Calu3 (cell line): ENCODE measurements at regions of chr1 and their contacts with region 1.

Region 1: DNA sequence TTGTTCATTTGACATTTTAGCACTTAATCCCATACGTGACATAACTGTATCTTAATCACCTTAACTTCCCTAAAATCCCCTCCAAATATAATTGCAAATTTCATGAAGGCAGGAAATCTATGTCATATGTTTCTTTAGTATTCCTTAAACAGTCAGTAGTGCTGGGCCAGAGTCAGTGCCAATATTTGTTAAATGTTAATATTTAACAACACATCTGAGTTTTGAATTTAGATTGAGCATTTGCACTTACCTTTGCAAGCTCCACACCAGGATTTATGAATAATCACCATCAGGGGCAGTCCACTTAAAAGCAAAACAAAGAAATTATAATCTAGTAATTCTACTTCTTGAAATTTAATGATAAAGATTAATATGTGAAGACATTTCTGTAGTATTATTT is 5.3 kb downstream of the KTI12 start:
- DNase-seq: no peak
- H3K4me3 Mint-ChIP-seq: no peak overlapping the region
- H3K27ac Mint-ChIP-seq: no peak overlapping the region
- H3K4me1 Mint-ChIP-seq: peaks cover 30% of the 10 kb centered on the region
- H3K27me3 Mint-ChIP-seq: no peaks in the 10 kb centered on the region
- CTCF ChIP-seq: no peak

Region 2: GRCh38 chr1:51453010-51453409 is 575.3 kb before region 1 on chr1:
- CTCF ChIA-PET with region 1: no interaction called
- intact Hi-C with region 1: loop called (anchors 5 kb)
- DNase-seq: no peak
- H3K4me3 Mint-ChIP-seq: no peak overlapping the region
- H3K27ac Mint-ChIP-seq: no peak overlapping the region
- H3K4me1 Mint-ChIP-seq: no peaks in the 10 kb centered on the region
- H3K27me3 Mint-ChIP-seq: no peaks in the 10 kb centered on the region
- CTCF ChIP-seq: no peak

Region 3: DNA sequence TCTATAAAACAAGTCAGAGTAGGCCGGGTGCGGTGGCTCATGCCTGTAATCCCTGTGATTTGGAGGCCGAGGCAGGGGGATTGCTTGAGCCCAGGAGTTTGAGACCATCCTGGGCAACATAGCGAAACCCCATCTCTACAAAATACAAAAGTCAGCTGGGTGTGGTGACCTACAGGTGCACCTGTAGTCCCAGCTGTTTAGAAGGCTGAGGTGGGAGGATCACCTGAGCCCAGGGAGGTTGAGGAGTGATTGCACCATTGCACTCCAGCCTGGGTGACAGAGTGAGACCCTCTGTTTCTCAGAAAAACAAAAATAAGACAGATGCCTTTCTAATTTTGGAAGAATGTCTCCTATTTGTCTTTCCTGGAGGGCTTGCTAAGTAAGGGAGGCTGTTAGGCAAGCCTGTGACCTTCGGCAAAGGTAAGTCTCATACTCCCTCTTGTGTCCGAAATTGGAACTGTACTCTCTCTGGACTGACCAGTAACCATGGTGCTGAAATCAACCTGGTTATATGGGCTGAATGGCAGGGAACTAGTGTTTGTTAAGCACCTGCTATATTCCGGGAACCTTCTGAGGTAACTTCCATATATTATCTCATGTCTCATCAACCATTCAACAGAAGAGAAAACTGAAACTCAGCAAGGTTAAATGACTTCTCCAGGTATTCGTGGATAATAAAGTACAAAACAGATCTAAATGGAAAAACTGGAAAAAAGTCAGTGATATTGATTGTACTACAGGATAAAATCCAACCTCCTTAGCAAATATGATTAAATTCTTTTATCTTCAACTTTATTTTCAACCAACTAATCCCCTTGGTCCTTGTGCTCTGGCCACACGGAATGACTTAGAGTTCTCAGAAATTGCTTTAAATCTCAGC is 26.1 kb before region 1 on chr1:
- CTCF ChIA-PET with region 1: no interaction called
- intact Hi-C with region 1: no loop called
- DNase-seq: peak; percentile 88
- H3K4me3 Mint-ChIP-seq: no peak overlapping the region
- H3K27ac Mint-ChIP-seq: peak overlapping the region; percentile 25
- H3K4me1 Mint-ChIP-seq: peaks cover 17% of the 10 kb centered on the region
- H3K27me3 Mint-ChIP-seq: peaks cover 23% of the 10 kb centered on the region
- CTCF ChIP-seq: peak; percentile 86